AG04449 (cell line): ENCODE measurements at regions of chr3 and their contacts with region 1.

Region 1: GRCh38 chr3:45656575-45657363 is 32.4 kb upstream of the SACM1L start:
- DNase-seq: peak; percentile 63
- H3K4me3 ChIP-seq: no peak overlapping the region
- CTCF ChIP-seq: peak; percentile 87

Region 2: DNA sequence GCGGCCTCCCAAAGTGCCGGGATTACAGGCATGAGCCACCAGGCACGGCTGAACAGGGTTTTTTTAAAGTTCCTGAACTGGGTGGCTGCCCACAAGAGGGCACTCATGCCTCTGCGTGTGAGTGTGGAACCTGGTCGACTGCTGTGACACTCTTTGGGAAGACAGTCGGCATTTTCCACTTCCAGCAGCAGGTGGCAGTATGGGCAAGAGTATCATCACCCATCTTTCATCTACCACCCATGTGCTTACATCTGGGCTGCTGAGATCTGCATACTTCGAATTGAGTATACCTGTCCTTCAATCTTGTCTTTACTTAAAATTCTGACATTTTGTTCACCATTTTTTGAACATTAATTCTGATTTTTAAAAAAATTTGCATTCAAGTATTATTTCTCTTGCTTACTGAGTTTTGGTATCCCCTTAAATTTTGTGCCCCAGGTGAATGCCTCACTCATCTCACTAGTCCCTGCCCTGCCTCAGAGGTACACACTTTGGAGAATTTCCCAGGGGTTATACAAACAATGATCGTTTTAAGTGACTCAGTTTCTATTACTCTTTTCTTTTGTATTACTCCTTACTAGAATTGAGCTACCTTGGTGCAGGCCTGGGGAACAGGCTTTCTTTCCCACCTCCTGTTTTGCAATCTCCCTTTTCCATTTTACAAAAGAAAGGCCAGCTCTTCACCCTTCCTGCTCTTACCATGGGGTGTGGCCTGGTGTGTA is 618.9 kb before region 1 on chr3:
- CTCF ChIA-PET with region 1: interaction called, 39 read pairs
- POLR2A ChIA-PET with region 1: no interaction called
- DNase-seq: peak; percentile 63
- H3K4me3 ChIP-seq: no peak overlapping the region
- CTCF ChIP-seq: peak; percentile 88

Region 3: DNA sequence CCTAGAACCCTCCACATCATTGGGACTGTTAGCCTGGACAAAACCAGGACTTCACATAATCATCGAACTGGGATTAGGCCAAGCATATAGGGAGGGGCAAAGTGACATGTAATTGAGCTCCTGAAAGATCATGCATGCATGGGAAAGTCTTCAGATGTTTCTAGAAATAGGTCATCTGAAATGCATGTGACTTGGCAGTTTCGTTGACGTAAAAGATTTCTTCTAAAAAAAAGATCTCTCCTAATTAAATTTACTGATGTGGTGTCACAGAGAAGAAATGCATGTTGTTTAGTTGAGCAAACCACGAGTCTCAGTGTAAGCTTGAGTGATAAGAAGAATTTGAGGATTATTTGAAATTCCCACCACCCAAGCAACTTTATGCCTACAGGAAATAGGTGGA is 132.2 kb before region 1 on chr3:
- CTCF ChIA-PET with region 1: interaction called, 11 read pairs
- POLR2A ChIA-PET with region 1: no interaction called
- DNase-seq: no peak
- H3K4me3 ChIP-seq: no peak overlapping the region
- CTCF ChIP-seq: no peak

Region 4: DNA sequence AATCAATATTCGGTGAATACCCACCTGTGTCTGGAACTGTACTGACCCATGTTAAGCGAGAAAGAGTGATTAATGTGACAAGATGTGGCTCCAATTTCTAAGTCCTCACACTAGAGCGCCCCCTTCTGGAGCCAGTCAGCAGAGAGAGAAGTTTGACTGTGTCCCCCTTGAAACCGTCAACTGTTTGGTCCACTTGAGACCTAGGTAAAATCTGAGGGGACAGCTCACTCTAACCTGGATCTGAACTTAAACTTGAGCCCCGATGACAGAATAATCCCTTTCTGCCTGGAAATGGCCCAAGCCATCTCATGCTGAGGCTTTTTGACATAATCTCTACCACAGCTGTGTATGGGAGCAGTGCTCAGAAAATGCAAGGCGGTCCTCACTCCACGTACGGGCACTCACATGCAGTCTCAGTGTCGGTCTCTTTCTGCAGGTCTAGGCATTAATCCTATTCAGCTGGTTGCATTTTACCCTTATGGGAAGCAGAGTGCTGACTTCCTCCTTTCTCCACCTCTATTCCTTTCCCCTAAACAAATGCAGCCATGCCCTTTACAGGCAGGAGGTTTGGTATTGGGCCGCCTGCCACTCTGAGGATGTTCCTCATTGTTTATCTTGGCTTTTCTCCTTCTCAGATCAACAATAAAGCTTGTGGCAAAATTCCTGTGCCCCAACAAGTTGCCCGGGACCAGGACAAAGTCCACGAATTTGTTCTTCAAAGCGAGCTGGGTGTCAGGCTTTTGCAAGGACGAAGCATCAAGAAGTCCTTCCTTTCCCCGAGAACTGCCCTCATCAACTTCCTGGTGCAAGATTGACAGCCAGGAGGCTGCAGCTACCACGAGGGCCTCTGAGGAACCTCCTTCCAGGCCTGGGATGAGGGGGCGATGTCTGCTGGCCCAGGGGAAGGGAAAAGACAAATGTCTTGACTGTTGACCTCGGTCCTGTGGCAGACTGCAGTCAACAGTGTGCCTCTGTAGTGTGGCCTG is 109.8 kb before region 1 on chr3:
- CTCF ChIA-PET with region 1: interaction called, 21 read pairs
- POLR2A ChIA-PET with region 1: interaction called, 3 read pairs
- DNase-seq: no peak
- H3K4me3 ChIP-seq: no peak overlapping the region
- CTCF ChIP-seq: peak; percentile 30

Region 5: GRCh38 chr3:45608885-45609284 is 47.9 kb before region 1 on chr3:
- CTCF ChIA-PET with region 1: interaction called, 14 read pairs
- POLR2A ChIA-PET with region 1: no interaction called
- DNase-seq: no peak
- H3K4me3 ChIP-seq: no peak overlapping the region
- CTCF ChIP-seq: no peak

Region 6: DNA sequence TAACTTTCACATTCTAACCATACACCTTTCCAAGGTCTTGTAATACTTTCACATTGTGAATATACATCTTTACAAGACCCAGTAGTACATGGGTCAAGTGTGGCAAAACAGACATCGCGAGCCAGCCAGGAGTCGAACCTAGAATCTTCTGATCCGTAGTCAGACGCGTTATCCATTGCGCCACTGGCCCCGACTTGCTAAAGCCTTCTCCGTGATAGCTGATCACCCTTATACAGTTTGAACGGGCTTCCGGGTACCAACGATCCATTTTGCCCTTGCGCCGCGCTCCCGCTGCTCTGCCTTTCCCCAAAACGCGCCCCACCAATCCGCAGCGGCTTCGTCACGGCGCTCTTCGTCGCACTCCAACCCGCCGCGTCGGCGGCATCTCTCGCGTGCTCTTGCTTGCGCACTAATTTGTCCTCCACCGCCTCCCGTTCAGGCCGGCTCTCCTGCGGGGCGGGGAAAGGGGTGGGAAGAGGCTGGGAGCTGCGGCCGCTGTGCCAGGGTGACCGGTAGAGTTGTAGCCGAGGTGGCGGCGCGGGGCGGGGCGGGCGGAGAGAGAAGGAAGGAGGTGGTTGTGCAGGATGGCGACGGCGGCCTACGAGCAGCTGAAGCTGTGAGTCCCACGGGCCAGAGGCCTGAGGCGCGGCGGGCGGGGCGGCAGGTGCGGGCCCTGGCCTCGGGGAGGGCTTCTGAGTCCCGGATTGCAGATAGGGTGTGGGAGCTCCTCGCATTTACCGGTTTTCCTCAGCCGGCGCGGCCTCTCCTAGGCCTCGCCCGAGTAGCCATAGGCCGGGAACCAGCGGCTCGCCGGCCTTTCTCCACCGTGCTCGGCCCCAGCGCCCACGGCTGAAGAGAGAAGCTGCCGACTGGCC is 32.4 kb after region 1 on chr3 and contains the start of gene SACM1L:
- CTCF ChIA-PET with region 1: interaction called, 22 read pairs
- POLR2A ChIA-PET with region 1: interaction called, 3 read pairs
- DNase-seq: peak; percentile 91
- H3K4me3 ChIP-seq: peak within 1 kb of the TSS; percentile 71
- CTCF ChIP-seq: no peak

Region 7: GRCh38 chr3:46378426-46378942 is 721.7 kb after region 1 on chr3:
- CTCF ChIA-PET with region 1: no interaction called
- POLR2A ChIA-PET with region 1: no interaction called
- DNase-seq: no peak
- H3K4me3 ChIP-seq: no peak overlapping the region
- CTCF ChIP-seq: peak; percentile 70